H1 (cell line): ENCODE measurements at regions of chr5 and their contacts with region 1.

Region 1: GRCh38 chr5:75331095-75332090 is 5.6 kb upstream of the HMGCR start:
- DNase-seq: no peak
- H3K4me3 ChIP-seq: no peak overlapping the region
- H3K27ac ChIP-seq: no peak overlapping the region
- H3K4me1 ChIP-seq: peaks cover 0 to 2% (median 0%) of the 10 kb centered on the region in 4 experiments; a peak in 1 of 7 replicates
- H3K27me3 ChIP-seq: no peaks in the 10 kb centered on the region
- CTCF ChIP-seq: peak in 1 of 3 experiments; percentile 11; a peak in 1 of 4 replicates
- EP300 ChIP-seq: no peak
- POLR2A ChIP-seq: no peak
- RAD21 ChIP-seq: no peak

Region 2: GRCh38 chr5:75320341-75320740 is 11.1 kb before region 1 on chr5:
- CTCF ChIA-PET with region 1: interaction called, 13 read pairs
- POLR2A ChIA-PET with region 1: interaction called, 5 read pairs
- DNase-seq: no peak
- H3K4me3 ChIP-seq: no peak overlapping the region
- H3K27ac ChIP-seq: no peak overlapping the region
- H3K4me1 ChIP-seq: peaks cover 4 to 17% (median 9%) of the 10 kb centered on the region in 4 experiments; a peak in 4 of 7 replicates
- H3K27me3 ChIP-seq: no peaks in the 10 kb centered on the region
- CTCF ChIP-seq: no peak
- EP300 ChIP-seq: no peak
- POLR2A ChIP-seq: no peak
- RAD21 ChIP-seq: no peak

Region 3: GRCh38 chr5:75351139-75351926 is 19.9 kb after region 1 on chr5:
- CTCF ChIA-PET with region 1: no interaction called
- POLR2A ChIA-PET with region 1: no interaction called
- DNase-seq: no peak
- H3K4me3 ChIP-seq: no peak overlapping the region
- H3K27ac ChIP-seq: no peak overlapping the region
- H3K4me1 ChIP-seq: no peaks in the 10 kb centered on the region
- H3K27me3 ChIP-seq: no peaks in the 10 kb centered on the region
- CTCF ChIP-seq: no peak
- EP300 ChIP-seq: no peak
- POLR2A ChIP-seq: no peak
- RAD21 ChIP-seq: no peak